ENCODE measurements at regions of chr18 and their contacts with region 1.

Region 1: GRCh38 chr18:75125382-75126331 is 83.3 kb downstream of the PTGR3 start:
- DNase-seq: no peak
- ATAC-seq: peak; percentile 21 to 31

Region 2: GRCh38 chr18:75003764-75004690 is 121.6 kb before region 1 on chr18:
- intact Hi-C with region 1: no loop called
- DNase-seq: no peak
- ATAC-seq: peak; percentile 70 to 97

Region 3: GRCh38 chr18:75066936-75067335 is 58.7 kb before region 1 on chr18:
- intact Hi-C with region 1: no loop called
- DNase-seq: no peak
- ATAC-seq: no peak

Region 4: DNA sequence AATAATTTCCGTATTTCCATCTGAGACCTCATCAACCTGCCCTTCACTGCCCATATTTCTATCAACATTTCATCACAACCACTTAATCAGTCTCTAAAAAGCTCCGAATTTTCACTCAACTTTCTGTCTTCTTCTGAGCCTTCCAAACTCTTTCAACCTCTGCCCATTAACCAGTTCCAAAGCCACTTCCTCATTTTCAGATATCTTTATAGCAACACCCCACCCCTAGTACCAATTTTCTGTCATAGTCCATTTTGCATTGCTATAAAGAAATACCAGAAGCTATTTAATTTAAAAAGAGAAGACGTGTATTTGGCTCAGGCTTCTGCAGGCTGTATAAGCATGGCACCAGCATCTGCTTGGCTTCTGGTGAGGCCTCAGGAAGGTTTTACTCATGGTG is 23.7 kb before region 1 on chr18:
- intact Hi-C with region 1: loop called in 1 of 2 experiments (anchors 2 kb)
- DNase-seq: no peak
- ATAC-seq: no peak